Activated CD4-positive, alpha-beta memory T cell treated with anti-CD3 and anti-CD28 coated beads for 36 hours (primary cell): ENCODE measurements at regions of chr22 and their contacts with region 1.

Region 1: GRCh38 chr22:37933711-37934376 is 19.6 kb downstream of the C22orf23 start:
- DNase-seq: peak; percentile 93
- H3K4me3 Mint-ChIP-seq: no peak overlapping the region
- H3K27ac Mint-ChIP-seq: no peak overlapping the region
- H3K4me1 Mint-ChIP-seq: peaks cover 8% of the 10 kb centered on the region
- H3K27me3 Mint-ChIP-seq: no peaks in the 10 kb centered on the region

Region 2: GRCh38 chr22:37887610-37888378 is 46.0 kb before region 1 on chr22:
- CTCF ChIA-PET with region 1: no interaction called
- POLR2A ChIA-PET with region 1: no interaction called
- intact Hi-C with region 1: loop called (anchors 2 kb)
- DNase-seq: no peak
- H3K4me3 Mint-ChIP-seq: no peak overlapping the region
- H3K27ac Mint-ChIP-seq: no peak overlapping the region
- H3K4me1 Mint-ChIP-seq: peaks cover 3% of the 10 kb centered on the region
- H3K27me3 Mint-ChIP-seq: no peaks in the 10 kb centered on the region

Region 3: GRCh38 chr22:37905534-37906363 is 28.1 kb before region 1 on chr22 and contains the start of gene MICALL1:
- CTCF ChIA-PET with region 1: interaction called, 12 read pairs
- POLR2A ChIA-PET with region 1: no interaction called
- intact Hi-C with region 1: no loop called
- DNase-seq: peak; percentile 73
- H3K4me3 Mint-ChIP-seq: peak within 1 kb of the TSS; percentile 75
- H3K27ac Mint-ChIP-seq: peak within 1 kb of the TSS; percentile 78
- H3K4me1 Mint-ChIP-seq: peaks cover 25% of the 10 kb centered on the region
- H3K27me3 Mint-ChIP-seq: no peaks in the 10 kb centered on the region
- total RNA-seq, gene MICALL1: 18.4 to 19.1 TPM

Region 4: DNA sequence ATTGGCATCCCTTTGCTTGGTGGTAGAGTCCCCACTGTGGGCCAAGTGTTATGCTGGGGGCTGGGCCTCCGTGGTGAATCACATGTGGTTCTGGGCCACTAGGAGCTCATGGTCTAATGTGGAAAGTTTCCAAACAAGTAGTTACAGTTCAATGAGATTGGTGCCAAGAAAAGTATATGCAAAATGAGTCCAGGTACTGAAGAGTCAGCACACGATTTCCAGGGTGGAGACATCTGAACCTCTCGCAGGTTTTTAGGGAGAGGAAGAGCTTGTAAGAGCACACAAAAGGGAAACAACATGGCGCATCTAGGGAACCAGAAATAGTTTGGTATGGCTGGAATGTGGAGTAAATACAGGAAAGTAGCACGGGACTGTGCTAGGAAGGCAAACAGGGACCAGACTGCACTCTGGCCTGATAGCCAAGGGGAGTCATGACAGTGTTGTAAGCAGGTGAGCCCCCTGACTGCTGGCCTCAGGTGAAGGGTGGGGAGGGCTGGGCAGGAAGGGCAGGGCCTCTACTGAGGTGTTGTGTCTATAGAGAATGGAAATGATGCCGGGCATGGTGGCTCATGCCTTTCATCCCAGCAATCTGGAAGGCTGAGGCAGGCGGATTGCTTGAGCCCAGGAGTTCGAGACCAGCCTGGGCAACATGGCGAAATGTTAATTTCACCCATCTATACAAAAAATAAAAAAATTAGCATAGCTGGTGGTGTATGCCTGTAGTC is 32.3 kb after region 1 on chr22:
- CTCF ChIA-PET with region 1: interaction called, 14 read pairs
- POLR2A ChIA-PET with region 1: no interaction called
- intact Hi-C with region 1: no loop called
- DNase-seq: no peak
- H3K4me3 Mint-ChIP-seq: no peak overlapping the region
- H3K27ac Mint-ChIP-seq: no peak overlapping the region
- H3K4me1 Mint-ChIP-seq: no peaks in the 10 kb centered on the region
- H3K27me3 Mint-ChIP-seq: no peaks in the 10 kb centered on the region

Region 5: GRCh38 chr22:38012604-38013072 is 78.8 kb after region 1 on chr22:
- CTCF ChIA-PET with region 1: no interaction called
- POLR2A ChIA-PET with region 1: no interaction called
- intact Hi-C with region 1: no loop called
- DNase-seq: no peak
- H3K4me3 Mint-ChIP-seq: no peak overlapping the region
- H3K27ac Mint-ChIP-seq: no peak overlapping the region
- H3K4me1 Mint-ChIP-seq: peaks cover 4% of the 10 kb centered on the region
- H3K27me3 Mint-ChIP-seq: no peaks in the 10 kb centered on the region